ENCODE measurements at regions of chr4 and their contacts with region 1.

Region 1: GRCh38 chr4:70734168-70734954 is 12.6 kb downstream of the RUFY3 start:
- DNase-seq: peak; percentile 52
- H3K4me3 Mint-ChIP-seq: peak overlapping the region; percentile 58
- H3K27ac Mint-ChIP-seq: peak overlapping the region; percentile 25
- H3K4me1 Mint-ChIP-seq: peaks cover 37% of the 10 kb centered on the region
- H3K27me3 Mint-ChIP-seq: no peaks in the 10 kb centered on the region

Region 2: DNA sequence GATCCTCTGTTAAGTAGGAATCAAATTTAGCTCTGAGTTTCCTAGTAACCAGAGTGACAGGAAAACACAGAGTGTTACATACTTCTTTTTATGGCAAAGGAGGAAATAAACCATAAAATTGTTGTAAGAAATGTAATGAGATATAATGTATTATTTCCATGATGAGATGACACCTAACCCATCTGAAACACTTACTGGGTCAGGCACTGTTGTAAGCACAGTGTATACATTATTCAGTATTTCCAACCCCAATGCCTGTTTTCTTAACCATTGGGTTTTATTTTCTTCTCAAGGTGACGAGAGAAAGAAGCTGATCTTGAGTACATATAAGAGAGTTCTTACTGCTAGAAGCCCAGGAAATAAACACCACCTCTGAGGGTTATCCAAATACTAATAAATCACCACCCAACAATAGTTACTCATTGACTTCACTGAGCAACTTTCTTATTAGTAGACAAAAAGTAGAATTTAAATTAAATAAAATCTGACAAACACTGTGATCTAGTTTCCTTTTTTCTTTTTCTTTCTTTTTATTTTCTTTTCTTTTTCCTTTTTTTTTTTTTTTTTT is 110.1 kb before region 1 on chr4:
- CTCF ChIA-PET with region 1: no interaction called
- intact Hi-C with region 1: loop called (anchors 5 kb)
- DNase-seq: no peak
- H3K4me3 Mint-ChIP-seq: no peak overlapping the region
- H3K27ac Mint-ChIP-seq: no peak overlapping the region
- H3K4me1 Mint-ChIP-seq: peaks cover 6% of the 10 kb centered on the region
- H3K27me3 Mint-ChIP-seq: no peaks in the 10 kb centered on the region

Region 3: DNA sequence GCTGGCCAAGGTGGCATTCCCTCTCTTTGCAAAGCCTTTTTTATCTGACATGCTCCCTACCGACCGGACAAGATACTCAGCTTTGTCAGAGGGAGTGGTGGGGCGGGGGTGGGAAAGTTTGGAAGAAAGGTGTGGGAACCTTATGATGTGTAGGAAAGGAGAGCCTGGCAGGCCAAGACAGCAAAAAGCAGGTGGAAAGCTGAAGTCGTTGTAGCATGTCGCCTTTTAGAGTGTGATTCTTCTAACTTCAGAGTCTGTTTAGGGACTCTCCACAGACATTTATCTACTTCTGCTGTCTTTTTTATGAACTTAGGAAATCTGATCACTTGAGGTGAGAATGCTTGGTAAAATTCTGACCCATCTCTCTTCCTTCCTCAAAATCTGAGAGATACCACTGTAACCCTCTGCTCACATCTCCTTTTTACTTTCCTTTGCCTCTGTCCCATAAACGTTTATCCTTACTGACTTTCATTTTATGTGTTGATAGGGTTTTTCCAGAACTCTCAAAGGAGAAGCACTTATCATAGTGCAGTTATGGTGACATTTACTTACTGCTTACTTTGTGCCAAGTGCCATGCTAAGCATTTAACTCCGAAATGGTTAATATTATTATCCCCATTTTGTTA is 20.8 kb before region 1 on chr4:
- CTCF ChIA-PET with region 1: interaction called, 12 read pairs
- intact Hi-C with region 1: loop called (anchors 1 kb)
- DNase-seq: no peak
- H3K4me3 Mint-ChIP-seq: peak overlapping the region; percentile 37
- H3K27ac Mint-ChIP-seq: peak overlapping the region; percentile 15
- H3K4me1 Mint-ChIP-seq: peaks cover 62% of the 10 kb centered on the region
- H3K27me3 Mint-ChIP-seq: no peaks in the 10 kb centered on the region

Region 4: DNA sequence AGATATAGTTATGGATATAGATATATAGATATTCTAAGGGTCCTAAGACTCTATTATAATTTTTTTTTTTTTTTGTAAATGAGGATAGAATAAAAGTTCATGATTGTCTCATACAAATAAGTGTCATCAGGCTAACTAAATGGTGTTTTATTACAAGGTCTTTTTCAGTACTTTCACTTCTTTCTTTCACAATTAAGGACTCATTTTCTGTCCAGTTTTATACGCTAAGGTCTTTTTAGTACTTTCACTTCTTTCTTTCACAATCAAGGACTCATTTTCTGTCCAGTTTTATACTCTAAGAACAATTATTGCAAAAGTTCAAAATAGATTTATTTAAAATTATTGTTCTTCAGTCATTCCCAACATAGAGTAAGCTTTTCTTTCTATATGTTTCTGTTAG is 20.1 kb after region 1 on chr4:
- CTCF ChIA-PET with region 1: interaction called, 14 read pairs
- intact Hi-C with region 1: loop called (anchors 1 kb)
- DNase-seq: no peak
- H3K4me3 Mint-ChIP-seq: no peak overlapping the region
- H3K27ac Mint-ChIP-seq: no peak overlapping the region
- H3K4me1 Mint-ChIP-seq: peaks cover 26% of the 10 kb centered on the region
- H3K27me3 Mint-ChIP-seq: no peaks in the 10 kb centered on the region

Region 5: DNA sequence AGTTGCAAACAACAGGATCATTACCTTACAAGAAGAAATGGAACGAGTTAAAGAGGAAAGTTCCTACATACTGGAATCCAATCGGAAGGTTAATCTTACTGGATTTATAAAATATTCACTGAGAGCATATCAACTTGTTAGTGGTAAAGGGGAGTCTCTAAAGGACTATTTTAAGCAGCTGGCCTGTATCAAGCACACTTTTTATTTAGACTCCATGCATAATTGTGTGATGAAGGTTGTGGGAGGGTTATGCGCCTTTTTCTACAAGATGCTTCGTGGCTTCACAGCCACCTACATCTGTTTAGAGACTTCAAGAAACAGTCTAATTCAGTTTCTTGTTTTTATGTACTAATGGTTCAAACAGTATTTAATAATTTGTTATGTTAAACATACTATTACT is 48.7 kb after region 1 on chr4:
- CTCF ChIA-PET with region 1: no interaction called
- intact Hi-C with region 1: no loop called
- DNase-seq: no peak
- H3K4me3 Mint-ChIP-seq: no peak overlapping the region
- H3K27ac Mint-ChIP-seq: no peak overlapping the region
- H3K4me1 Mint-ChIP-seq: no peaks in the 10 kb centered on the region
- H3K27me3 Mint-ChIP-seq: no peaks in the 10 kb centered on the region

Region 6: DNA sequence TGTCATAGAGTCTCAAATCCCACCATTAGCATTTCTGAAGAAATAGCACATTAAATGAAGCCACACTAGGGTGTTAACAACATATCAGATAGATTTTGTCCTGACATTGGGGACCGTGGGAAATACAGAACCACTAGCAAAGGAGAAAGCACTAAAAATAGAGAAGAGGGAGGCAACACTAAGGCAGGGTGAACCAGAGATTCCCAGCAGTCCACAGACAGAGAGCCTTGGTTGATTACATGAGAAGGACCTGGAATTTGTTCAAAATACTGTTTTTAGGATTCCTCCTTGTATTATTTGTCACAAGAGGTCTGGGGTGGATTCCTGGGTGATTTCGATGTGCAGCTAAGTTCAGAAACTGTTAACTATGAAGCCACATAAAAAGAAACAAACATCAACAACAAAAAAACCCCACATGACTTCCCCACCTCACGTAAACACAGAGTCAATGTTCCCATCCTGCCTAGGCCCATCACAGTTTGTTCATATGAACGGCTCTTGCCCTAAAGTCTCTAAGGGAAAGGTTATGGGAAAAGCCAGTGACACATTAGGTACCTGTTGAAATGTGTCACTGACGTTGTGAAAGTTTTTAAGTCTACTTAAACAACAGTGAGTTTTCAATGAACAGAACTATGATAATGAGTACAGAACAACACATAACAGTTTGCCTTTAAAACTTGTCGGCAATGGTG is 128.9 kb after region 1 on chr4:
- CTCF ChIA-PET with region 1: no interaction called
- intact Hi-C with region 1: loop called (anchors 1 kb)
- DNase-seq: peak; percentile 53
- H3K4me3 Mint-ChIP-seq: no peak overlapping the region
- H3K27ac Mint-ChIP-seq: no peak overlapping the region
- H3K4me1 Mint-ChIP-seq: peaks cover 11% of the 10 kb centered on the region
- H3K27me3 Mint-ChIP-seq: no peaks in the 10 kb centered on the region

Region 7: DNA sequence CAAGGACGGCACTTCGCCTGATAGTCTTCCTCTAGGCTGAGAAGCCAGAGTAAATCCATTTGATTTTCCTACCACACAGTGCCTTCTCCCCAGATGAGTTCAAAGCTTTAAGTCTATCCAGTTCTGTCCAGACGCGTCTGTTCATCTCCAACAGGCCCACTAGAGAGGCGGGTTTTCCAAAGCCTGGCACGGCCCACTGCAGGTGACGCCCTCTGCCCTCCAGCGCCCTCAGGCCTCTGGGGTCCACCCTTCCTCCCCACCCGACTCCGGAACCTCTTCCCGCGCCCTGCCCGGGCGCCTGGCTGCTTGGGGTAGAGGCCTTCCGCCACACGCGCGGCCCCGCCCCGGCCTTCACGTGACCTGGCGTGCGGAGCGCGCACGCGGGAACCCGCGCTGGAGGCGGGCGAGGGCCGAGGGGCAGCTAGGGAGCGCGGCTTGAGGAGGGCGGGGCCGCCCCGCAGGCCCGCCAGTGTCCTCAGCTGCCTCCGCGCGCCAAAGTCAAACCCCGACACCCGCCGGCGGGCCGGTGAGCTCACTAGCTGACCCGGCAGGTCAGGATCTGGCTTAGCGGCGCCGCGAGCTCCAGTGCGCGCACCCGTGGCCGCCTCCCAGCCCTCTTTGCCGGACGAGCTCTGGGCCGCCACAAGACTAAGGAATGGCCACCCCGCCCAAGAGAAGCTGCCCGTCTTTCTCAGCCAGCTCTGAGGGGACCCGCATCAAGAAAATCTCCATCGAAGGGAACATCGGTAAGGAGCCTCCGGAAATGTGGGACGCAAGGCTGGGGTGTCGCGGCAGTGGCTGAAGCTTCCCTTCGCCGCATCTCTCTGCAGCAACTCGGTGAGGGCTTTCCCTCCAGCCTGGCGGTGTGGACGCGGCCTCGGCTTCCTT is 259.1 kb after region 1 on chr4 and contains the start of gene DCK:
- CTCF ChIA-PET with region 1: interaction called, 5 read pairs
- intact Hi-C with region 1: loop called (anchors 2 kb)
- DNase-seq: peak; percentile 83
- H3K4me3 Mint-ChIP-seq: peak within 1 kb of the TSS; percentile 96
- H3K27ac Mint-ChIP-seq: peak within 1 kb of the TSS; percentile 91
- H3K4me1 Mint-ChIP-seq: peaks cover 34% of the 10 kb centered on the region
- H3K27me3 Mint-ChIP-seq: no peaks in the 10 kb centered on the region
- total RNA-seq, gene DCK: 32.1 to 34.1 TPM

Measured in activated naive CD4-positive, alpha-beta T cell treated with anti-CD3 and anti-CD28 coated beads for 36 hours (primary cell).